A549 (cell line): ENCODE measurements at regions of chr19 and their contacts with region 1.

Region 1: DNA sequence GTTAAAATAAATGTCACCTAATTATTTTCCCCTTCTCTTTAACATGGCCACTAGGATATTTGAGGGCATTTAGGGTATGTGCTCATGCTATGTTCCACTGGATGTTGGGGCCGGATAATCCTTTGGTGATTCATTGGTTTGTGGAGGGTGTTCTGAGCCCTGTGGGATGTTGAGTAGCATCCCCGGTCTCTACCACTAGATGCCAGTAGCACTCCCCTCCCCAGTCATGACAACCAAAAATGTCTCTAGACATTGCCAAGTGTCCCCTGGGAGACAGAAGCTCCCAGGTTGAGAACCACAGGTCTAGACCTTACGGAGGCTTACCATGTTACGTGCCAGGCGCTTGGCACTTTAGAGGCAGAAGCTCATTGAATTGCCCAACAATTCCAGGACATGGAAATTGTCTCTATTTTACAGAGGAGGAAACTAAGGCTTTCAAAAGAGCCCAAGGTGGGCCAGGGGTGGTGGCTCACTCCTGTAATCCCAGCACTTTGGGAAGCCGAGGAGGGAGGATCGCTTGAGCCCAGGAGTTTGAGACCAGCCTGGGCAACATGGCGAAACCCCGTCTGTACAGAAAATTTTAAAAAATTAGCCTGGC is 14.1 kb downstream of the SHANK1 start:
- DNase-seq: peak; percentile 79 to 95
- ATAC-seq: peak; percentile 84 to 88
- H3K4me3 ChIP-seq: no peak overlapping the region
- H3K27ac ChIP-seq: no peak overlapping the region
- H3K4me1 ChIP-seq: peaks cover 13% of the 10 kb centered on the region; the same call in 1 of the 3 replicates
- CTCF ChIP-seq: peak; percentile 80
- EP300 ChIP-seq: no peak
- POLR2A ChIP-seq: no peak
- RAD21 ChIP-seq: peak; percentile 73 to 76

Region 2: DNA sequence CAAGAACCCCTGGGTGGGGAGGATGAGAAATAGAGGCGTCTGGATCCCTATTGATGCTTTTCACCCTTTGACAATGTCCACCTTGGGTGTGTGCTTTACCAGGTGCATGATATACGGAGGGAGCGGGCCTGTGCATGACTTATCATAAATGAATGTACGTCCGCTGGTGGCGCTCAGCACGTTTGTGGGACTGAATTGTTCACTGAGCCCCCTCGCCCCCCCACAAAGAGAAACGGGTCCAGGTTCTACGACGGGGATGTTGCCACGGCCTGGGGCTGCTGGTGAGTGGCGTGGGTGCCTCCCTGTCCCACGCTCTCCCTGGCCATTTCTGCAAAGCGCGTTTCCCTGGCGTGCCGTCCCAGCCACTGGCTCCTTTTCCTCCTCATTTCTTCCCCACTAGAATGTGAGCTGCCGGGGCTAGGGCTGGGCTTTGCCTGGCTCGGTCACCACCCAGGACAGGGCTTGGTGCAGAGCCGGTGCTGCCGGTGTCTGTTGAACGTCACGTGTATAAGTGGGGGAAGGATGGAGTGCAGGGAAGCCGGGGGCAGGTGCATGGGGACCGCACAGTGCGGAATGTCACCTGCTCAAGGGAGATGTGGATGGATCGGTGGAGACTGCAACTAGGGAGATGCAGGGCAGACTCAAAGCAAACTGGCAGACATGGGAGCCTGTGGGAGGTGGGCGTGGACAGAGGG is 158.8 kb before region 1 on chr19:
- CTCF ChIA-PET with region 1: no interaction called
- POLR2A ChIA-PET with region 1: no interaction called
- DNase-seq: no peak
- ATAC-seq: no peak
- H3K4me3 ChIP-seq: no peak overlapping the region
- H3K27ac ChIP-seq: no peak overlapping the region
- H3K4me1 ChIP-seq: no peaks in the 10 kb centered on the region; the same call in 2 of the 3 replicates
- CTCF ChIP-seq: no peak
- EP300 ChIP-seq: no peak
- POLR2A ChIP-seq: no peak
- RAD21 ChIP-seq: no peak

Region 3: DNA sequence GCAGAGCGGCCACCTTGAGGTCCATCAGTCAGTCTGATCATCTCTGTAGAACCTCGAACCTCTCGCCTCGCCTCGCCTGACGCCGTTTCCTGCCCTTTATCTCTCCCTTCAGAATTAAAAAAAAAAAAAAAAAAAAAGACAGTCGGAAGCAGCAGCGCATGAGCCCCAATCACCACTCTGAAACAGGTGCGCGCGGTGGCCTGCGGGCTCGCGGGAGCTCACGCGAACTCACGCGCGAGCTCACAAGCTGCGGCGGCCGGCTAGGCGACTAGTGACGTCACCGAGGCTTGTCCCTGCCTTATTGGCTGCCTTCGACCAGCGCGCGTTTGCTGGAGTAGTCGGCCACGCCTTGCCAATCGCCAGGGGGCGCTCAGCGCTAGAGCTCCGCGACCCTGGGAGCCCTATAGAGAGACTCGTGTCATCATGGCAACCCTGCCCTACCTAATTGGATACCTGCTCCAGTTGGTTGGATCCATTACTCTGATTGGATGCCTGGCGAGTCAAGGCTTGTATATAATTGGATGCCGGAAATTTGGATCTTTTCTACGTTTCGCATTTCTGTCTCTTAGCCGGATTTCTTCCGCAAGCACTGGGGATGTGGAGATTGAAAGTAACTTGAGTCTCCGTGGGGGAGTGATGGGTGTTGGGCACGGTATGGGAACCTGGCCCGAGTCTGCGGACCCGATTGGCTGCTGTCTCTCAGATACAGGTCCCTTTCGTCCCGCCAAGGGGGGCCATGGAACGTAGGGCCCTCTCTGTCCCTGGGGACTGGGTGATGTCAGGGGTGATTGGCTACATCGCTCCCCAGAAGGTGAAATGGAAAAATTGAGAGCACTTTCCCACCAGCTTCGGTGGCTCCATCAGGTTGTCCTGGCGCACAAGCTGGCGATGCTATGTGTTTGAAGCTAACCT is 97.4 kb before region 1 on chr19:
- CTCF ChIA-PET with region 1: interaction called, 11 read pairs
- POLR2A ChIA-PET with region 1: interaction called, 4 read pairs
- DNase-seq: peak; percentile 97 to 99
- ATAC-seq: peak; percentile 86 to 90
- H3K4me3 ChIP-seq: peak overlapping the region; percentile 28
- H3K27ac ChIP-seq: peak overlapping the region in 1 of 2 experiments; percentile 37; a peak in 3 of 6 replicates
- H3K4me1 ChIP-seq: peaks cover 5% of the 10 kb centered on the region; the same call in 1 of the 3 replicates
- CTCF ChIP-seq: peak; percentile 82
- EP300 ChIP-seq: no peak
- POLR2A ChIP-seq: no peak
- RAD21 ChIP-seq: peak; percentile 80 to 82

Region 4: DNA sequence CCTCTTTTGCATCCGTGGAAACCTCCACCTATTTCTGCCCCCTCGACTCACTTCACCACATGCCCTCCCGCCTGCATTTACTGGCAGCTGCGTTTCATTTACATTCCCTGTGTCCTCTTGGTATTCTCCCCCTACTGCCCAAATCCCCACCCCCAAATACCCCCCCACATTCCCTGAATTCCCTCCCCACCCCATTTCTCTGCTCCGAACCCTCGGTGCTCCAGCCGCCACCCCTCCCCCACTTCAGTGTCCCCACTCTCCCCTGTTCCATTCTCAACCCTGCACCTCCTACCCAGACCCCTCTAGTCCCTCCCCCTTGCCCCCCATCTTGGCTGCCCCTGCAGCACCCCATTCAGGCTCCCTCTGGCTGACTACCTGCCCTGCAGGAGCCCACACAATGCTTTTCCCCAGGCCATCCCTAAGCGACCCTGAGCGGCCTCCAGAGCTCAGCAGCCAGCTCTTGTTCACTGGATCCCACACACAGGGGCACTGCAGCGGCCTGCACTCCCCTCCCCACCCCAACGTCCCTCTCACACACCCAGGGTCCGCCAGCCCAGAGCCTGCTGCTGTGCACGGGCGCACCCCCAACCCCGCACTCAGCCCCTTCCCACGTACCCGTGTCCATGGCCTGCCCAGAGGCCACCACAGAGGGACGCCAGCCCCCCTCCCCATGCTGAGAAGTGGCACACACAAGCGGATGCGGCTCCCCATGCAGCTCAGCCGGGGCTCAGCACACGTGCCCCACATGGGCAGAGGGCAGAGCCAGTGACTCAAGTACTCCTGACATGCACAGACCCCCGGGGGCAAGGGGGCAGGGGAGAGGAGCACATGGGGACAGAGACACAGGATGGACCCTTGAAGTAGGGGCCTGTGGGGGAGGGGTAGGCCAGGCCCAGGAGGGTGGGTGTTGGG is 12.2 kb before region 1 on chr19:
- CTCF ChIA-PET with region 1: interaction called, 14 read pairs
- POLR2A ChIA-PET with region 1: no interaction called
- DNase-seq: no peak
- ATAC-seq: no peak
- H3K4me3 ChIP-seq: no peak overlapping the region
- H3K27ac ChIP-seq: no peak overlapping the region
- H3K4me1 ChIP-seq: peaks cover 12% of the 10 kb centered on the region; the same call in 2 of the 3 replicates
- CTCF ChIP-seq: no peak
- EP300 ChIP-seq: no peak
- POLR2A ChIP-seq: no peak
- RAD21 ChIP-seq: no peak

Region 5: DNA sequence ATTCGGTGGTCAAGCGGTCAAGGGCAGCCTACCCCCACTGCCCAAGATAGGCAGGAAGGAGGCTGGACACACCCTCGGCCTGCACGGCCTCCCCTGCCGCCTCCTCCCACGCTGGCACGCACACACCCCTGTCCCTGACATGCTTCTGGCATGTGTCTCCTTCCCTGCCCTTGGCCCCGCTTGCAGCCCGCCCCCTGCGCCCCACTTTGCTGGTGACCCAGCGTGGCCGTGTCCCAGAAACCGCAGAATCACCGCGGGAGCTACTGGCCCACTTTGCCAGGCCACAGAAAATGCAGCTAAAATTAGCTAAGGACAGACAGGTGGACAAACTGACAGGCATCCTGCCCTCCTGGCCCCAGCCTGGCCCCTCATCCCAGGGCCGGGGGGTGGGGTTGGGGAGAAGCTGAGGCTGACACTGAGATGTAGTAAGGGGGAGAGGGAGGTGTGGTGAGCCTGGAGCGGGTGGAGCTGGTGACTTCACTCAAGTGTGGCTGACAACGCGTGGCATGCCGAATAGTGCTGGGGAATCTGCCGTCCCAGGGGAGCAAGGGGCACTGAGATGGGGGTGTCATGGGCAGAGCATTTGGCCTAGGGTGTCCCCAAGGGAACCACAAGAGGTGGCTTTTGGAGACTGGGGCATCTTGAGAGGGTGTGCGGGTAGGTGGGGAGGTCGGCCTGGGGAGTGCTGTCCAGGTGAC is 11.7 kb after region 1 on chr19:
- CTCF ChIA-PET with region 1: interaction called, 119 read pairs
- POLR2A ChIA-PET with region 1: no interaction called
- DNase-seq: no peak
- ATAC-seq: 0 out of 6 replicates have a peak, but pooled peaks of 1 of the 2 experiments have one; percentile 5
- H3K4me3 ChIP-seq: no peak overlapping the region
- H3K27ac ChIP-seq: no peak overlapping the region
- H3K4me1 ChIP-seq: peaks cover 13% of the 10 kb centered on the region; the same call in 2 of the 3 replicates
- CTCF ChIP-seq: no peak
- EP300 ChIP-seq: no peak
- POLR2A ChIP-seq: no peak
- RAD21 ChIP-seq: no peak

Region 6: DNA sequence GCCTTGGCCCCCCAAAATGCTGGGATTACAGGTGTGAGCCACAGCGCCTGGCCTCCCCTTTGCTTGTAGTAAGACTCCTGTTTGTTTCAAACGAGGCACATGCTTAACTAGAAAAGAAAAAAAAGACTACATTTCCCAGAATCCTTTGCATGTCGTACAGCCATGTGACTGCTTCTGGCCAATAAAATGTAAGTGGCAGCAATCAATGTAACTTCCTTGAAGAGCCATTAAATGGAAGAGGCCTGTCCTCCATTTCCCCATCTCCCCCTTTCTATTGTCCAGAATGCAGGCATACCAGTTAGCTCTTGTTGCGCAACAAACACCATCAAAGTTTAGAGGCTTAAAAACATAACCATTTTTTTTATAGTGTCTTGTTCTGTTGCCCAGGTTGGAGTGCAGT is 54.4 kb after region 1 on chr19:
- CTCF ChIA-PET with region 1: interaction called, 10 read pairs
- POLR2A ChIA-PET with region 1: no interaction called
- DNase-seq: peak; percentile 55 to 72
- ATAC-seq: peak in 1 of 2 experiments; percentile 59; a peak in 3 of 6 replicates
- H3K4me3 ChIP-seq: no peak overlapping the region
- H3K27ac ChIP-seq: no peak overlapping the region
- H3K4me1 ChIP-seq: no peaks in the 10 kb centered on the region
- CTCF ChIP-seq: no peak
- EP300 ChIP-seq: no peak
- POLR2A ChIP-seq: no peak
- RAD21 ChIP-seq: no peak

Region 7: DNA sequence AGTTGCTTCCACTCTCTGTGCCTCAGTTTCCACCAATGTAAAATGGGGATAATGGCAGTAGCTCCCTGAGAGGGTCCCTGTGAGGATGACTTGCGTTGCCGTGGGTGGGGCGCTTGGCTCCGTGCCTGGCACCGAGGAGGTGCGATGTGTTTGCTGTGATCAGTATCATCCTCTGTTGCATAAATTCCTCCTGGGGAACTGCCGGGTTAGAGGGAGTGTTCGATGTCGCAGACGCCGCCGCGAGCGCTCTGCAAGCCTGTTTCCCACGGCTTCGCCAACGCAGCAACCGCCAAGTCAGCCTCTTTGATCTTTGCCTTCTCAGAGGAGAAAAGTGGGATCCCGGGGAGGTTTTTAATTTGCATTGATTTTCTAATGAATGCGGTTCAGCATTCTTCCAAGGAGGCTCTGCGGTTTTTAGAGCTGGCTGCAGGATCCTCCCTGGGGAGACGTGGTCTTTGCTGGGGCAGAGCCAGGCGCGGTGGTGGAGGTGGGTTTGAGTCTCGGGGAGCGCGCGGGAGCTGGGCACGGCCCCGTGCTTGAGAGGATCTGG is 72.3 kb after region 1 on chr19:
- CTCF ChIA-PET with region 1: interaction called, 111 read pairs
- POLR2A ChIA-PET with region 1: no interaction called
- DNase-seq: peak in 1 of 2 experiments; percentile 71
- ATAC-seq: peak; percentile 36 to 62; a peak in 5 of 6 replicates
- H3K4me3 ChIP-seq: peak overlapping the region; percentile 29; the same call in 2 of the 3 replicates
- H3K27ac ChIP-seq: no peak overlapping the region
- H3K4me1 ChIP-seq: peaks cover 14% of the 10 kb centered on the region; the same call in 1 of the 3 replicates
- CTCF ChIP-seq: no peak
- EP300 ChIP-seq: no peak
- POLR2A ChIP-seq: no peak
- RAD21 ChIP-seq: no peak

Region 8: DNA sequence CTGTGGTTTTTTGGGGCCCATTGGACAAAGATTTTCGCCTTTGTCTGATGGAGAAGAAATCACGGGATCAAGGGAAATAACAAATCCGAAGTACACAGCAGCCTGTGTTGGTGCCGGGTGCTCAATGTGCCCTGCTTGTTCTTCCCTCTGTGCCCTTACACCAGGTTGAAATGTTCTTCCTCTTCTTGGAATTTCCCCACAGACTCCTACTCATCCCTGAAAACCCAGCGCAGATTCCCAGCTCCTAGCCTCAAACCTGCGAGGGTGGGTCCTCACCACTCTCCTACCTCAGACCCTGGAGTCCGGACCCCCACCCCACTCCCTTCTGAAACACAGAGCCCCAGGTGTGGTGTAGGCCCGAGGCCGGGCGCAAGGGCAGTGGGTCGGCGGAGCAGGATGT is 79.8 kb after region 1 on chr19:
- CTCF ChIA-PET with region 1: interaction called, 111 read pairs
- POLR2A ChIA-PET with region 1: no interaction called
- DNase-seq: no peak
- ATAC-seq: no peak
- H3K4me3 ChIP-seq: no peak overlapping the region
- H3K27ac ChIP-seq: no peak overlapping the region
- H3K4me1 ChIP-seq: peaks cover 7% of the 10 kb centered on the region; the same call in 2 of the 3 replicates
- CTCF ChIP-seq: no peak
- EP300 ChIP-seq: no peak
- POLR2A ChIP-seq: no peak
- RAD21 ChIP-seq: no peak